Activated B cell treated with CpG ODN at 0.5 μM for 24 hours (primary cell): ENCODE measurements at regions of chrX and their contacts with region 1.

Region 1: DNA sequence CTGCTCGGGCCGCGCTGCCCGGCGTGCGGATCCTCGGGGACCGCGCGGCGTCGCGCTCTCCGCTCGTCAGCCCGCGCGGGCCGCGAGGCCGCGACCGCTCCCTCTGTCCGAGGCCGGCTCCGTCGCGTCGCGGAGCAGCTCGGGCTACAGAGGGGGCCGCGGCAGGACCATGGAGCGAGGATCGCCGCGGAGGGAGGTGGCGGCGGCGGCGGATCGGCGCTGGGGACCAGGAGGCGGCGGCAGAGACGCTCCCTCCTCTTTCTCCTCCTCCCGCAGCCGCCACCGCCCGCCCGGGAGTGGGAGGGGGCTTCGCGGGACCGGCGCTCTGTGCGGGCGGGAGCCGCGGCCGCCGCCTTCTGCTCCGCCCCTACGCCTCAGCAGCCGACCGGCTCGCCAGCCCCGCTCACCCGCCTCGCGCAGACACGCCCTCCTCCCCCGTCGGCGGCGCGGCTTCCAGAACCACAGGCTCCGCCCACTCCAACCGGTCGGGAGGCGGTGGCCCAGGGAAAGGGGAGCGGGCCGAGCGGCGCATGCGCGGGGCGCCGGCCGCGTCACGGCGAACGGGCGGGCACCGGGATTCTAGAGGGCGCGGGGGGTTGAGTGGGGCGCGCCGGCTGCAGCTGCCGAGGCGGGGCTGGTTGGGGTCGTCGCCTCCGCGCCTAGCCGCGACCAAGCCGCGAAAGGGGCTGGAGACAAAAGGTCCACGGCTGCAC is at the start of gene CASK:
- DNase-seq: peak; percentile 78
- ATAC-seq: peak; percentile 89
- H3K4me3 Mint-ChIP-seq: peak within 1 kb of the TSS; percentile 91
- H3K27ac Mint-ChIP-seq: peak within 1 kb of the TSS; percentile 81
- H3K4me1 Mint-ChIP-seq: peaks cover 20% of the 10 kb centered on the region
- H3K27me3 Mint-ChIP-seq: no peaks in the 10 kb centered on the region
- CTCF ChIP-seq: no peak
- total RNA-seq, gene CASK: 21.5 and 23.0 TPM in 2 replicates

Region 2: DNA sequence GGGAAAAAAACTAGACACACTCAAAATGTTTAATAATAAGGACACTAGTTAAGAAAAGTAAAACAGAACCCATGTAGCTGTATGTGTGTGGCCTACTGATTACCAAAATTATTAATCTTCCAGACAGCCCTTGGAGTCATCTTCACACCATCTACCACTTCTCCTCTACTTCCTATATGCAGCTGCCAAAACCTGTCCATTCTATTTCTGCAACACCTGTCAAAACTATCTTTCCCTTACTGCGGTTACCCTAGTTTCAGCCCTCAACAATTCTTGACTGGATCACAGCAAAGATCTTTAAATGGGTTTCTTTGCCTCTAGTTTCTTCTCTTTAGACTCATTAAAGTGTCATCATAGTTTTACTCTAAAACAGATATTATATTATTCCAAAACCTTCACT is 126.8 kb before region 1 on chrX:
- CTCF ChIA-PET with region 1: no interaction called
- POLR2A ChIA-PET with region 1: no interaction called
- intact Hi-C with region 1: loop called (anchors 5 kb)
- DNase-seq: no peak
- ATAC-seq: no peak
- H3K4me3 Mint-ChIP-seq: no peak overlapping the region
- H3K27ac Mint-ChIP-seq: no peak overlapping the region
- H3K4me1 Mint-ChIP-seq: peaks cover 32% of the 10 kb centered on the region
- H3K27me3 Mint-ChIP-seq: no peaks in the 10 kb centered on the region
- CTCF ChIP-seq: no peak

Region 3: DNA sequence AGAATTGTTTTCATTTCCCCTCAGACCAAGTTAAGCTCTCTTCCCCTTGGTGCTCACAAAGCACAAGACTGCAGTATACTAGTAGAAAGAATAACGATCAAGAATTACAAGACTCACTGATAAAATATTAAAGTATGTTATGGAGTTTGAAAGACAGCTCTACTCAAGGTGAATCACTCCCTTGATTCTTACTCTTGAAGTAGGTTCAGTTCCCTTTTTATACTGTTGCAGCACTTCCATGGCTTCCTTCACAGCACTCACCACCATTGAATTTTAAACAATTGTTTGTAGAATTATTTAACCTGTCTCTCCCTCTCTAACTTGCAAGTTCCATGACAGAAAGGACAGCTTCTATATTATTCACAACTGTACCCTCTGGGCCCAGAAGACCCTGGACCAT is 42.2 kb before region 1 on chrX:
- CTCF ChIA-PET with region 1: no interaction called
- POLR2A ChIA-PET with region 1: no interaction called
- intact Hi-C with region 1: loop called (anchors 5 kb)
- DNase-seq: no peak
- ATAC-seq: no peak
- H3K4me3 Mint-ChIP-seq: no peak overlapping the region
- H3K27ac Mint-ChIP-seq: peak overlapping the region; percentile 8
- H3K4me1 Mint-ChIP-seq: peaks cover 36% of the 10 kb centered on the region
- H3K27me3 Mint-ChIP-seq: no peaks in the 10 kb centered on the region
- CTCF ChIP-seq: no peak

Region 4: DNA sequence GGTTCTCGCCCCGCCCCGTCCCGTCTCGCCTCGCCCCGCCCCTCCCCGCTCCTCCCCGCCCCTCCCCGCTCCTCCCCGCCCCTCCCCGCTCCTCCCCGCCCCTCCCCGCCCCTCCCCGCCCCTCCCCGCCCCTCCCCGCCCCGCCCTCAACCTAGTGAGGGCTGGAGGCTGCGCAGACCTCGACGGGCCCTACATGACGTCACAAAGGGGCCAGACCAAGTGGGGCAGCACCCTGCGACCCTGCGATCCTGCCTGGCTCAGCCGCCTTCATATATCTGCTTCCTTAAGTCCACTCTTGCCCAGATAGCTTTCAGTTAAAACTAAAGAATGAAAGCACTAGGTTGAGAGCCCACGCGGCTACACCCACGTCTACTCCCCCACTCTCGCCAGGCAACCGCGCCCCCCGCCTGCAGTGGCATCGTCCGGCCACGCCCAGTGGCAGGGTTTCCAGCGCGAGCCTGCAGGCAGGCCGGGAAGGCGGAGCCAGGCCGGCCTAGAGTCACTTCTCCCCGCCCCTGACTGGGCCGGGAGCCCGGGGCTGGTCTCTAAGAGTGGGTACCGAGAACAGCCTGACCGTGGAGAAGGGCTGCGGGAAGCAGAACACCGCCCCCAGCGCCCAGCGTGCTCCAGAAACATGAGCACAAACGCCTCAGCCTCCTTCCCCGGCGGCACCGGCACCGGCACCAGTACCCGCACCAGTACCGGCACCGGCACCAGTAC is 1731.2 kb after region 1 on chrX:
- CTCF ChIA-PET with region 1: no interaction called
- POLR2A ChIA-PET with region 1: no interaction called
- intact Hi-C with region 1: loop called (anchors 1 kb)
- DNase-seq: peak; percentile 75
- ATAC-seq: peak; percentile 95
- H3K4me3 Mint-ChIP-seq: peak overlapping the region; percentile 93
- H3K27ac Mint-ChIP-seq: peak overlapping the region; percentile 97
- H3K4me1 Mint-ChIP-seq: peaks cover 11% of the 10 kb centered on the region
- H3K27me3 Mint-ChIP-seq: peaks cover 2% of the 10 kb centered on the region
- CTCF ChIP-seq: no peak